Breast epithelium (tissue), 4 donors: ENCODE measurements at regions of chr15 and their contacts with region 1.

Region 1: GRCh38 chr15:90360746-90361145 is 8.7 kb downstream of the ZNF774 start:
- DNase-seq: no peak
- H3K4me3 ChIP-seq: no peak overlapping the region
- H3K27ac ChIP-seq: no peak overlapping the region
- H3K4me1 ChIP-seq: no peaks in the 10 kb centered on the region
- H3K27me3 ChIP-seq: no peaks in the 10 kb centered on the region
- CTCF ChIP-seq: no peak
- POLR2A ChIP-seq: no peak

Region 2: DNA sequence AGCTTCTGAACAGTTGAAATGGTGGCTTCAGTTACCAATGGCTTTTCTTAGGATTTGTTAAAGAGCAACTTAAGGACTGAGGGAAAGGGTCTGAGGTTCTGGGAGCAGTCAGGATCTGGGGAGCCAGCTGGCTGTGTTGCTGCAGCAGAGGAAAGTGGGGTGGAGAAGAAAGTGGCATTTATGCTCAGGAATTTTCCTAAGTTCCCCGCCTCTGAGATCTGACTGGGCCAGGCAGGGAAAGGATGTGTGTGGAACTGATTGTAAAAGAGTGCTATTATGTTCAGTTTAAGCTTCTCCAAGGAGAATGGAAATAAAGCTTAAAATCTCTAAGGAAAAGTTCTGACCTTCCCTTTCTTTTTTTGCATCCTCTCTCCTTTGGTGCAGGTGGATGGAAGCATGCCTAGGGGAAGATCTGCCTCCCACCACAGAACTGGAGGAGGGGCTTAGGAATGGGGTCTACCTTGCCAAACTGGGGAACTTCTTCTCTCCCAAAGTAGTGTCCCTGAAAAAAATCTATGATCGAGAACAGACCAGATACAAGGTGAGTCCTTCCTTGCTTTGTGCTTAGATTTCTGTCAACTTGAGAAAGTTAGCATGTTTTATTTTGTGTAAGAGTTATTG is 65.1 kb after region 1 on chr15:
- intact Hi-C with region 1: loop called (anchors 2 kb)
- DNase-seq: no peak
- H3K4me3 ChIP-seq: no peak overlapping the region
- H3K27ac ChIP-seq: no peak overlapping the region
- H3K4me1 ChIP-seq: peaks cover 4 to 19% of the 10 kb centered on the region in 2 donors
- H3K27me3 ChIP-seq: no peaks in the 10 kb centered on the region
- CTCF ChIP-seq: no peak
- POLR2A ChIP-seq: no peak